CD8-positive, alpha-beta T cell (primary cell): ENCODE measurements at regions of chr3 and their contacts with region 1.

Region 1: GRCh38 chr3:151227807-151228665 is 25.0 kb upstream of the GPR171 start:
- DNase-seq: peak; percentile 61 to 88 (median 79)
- ATAC-seq: peak; percentile 83
- H3K4me3 ChIP-seq: no peak overlapping the region
- H3K4me3 Mint-ChIP-seq: no peak overlapping the region
- H3K27ac ChIP-seq: no peak overlapping the region
- H3K27ac Mint-ChIP-seq: peak overlapping the region; percentile 4
- H3K4me1 ChIP-seq: peaks cover 16% of the 10 kb centered on the region
- H3K4me1 Mint-ChIP-seq: peaks cover 48% of the 10 kb centered on the region
- H3K27me3 ChIP-seq: no peaks in the 10 kb centered on the region
- H3K27me3 Mint-ChIP-seq: no peaks in the 10 kb centered on the region
- CTCF ChIP-seq: peak; percentile 92

Region 2: GRCh38 chr3:151203051-151203420 is 25.0 kb before region 1 on chr3 and contains the start of gene GPR171:
- CTCF ChIA-PET with region 1: interaction called, 18 read pairs
- POLR2A ChIA-PET with region 1: interaction called, 4 read pairs
- intact Hi-C with region 1: loop called in 1 of 2 experiments (anchors 1 kb)
- DNase-seq: peak; percentile 46 to 91 (median 68)
- ATAC-seq: peak; percentile 84
- H3K4me3 ChIP-seq: peak within 1 kb of the TSS; percentile 50 to 59
- H3K4me3 Mint-ChIP-seq: peak within 1 kb of the TSS; percentile 76
- H3K27ac ChIP-seq: peak within 1 kb of the TSS; percentile 36 to 72
- H3K27ac Mint-ChIP-seq: peak within 1 kb of the TSS; percentile 91
- H3K4me1 ChIP-seq: peaks cover 67% of the 10 kb centered on the region
- H3K4me1 Mint-ChIP-seq: peaks cover 81% of the 10 kb centered on the region
- H3K27me3 ChIP-seq: no peaks in the 10 kb centered on the region
- H3K27me3 Mint-ChIP-seq: no peaks in the 10 kb centered on the region
- CTCF ChIP-seq: no peak
- total RNA-seq, gene GPR171: 11.5 to 13.4 TPM

Region 3: GRCh38 chr3:151256749-151257148 is 28.7 kb after region 1 on chr3:
- CTCF ChIA-PET with region 1: interaction called, 18 read pairs
- POLR2A ChIA-PET with region 1: no interaction called
- intact Hi-C with region 1: no loop called
- DNase-seq: no peak
- ATAC-seq: no peak
- H3K4me3 ChIP-seq: no peak overlapping the region
- H3K4me3 Mint-ChIP-seq: no peak overlapping the region
- H3K27ac ChIP-seq: no peak overlapping the region
- H3K27ac Mint-ChIP-seq: no peak overlapping the region
- H3K4me1 ChIP-seq: no peaks in the 10 kb centered on the region
- H3K4me1 Mint-ChIP-seq: no peaks in the 10 kb centered on the region
- H3K27me3 ChIP-seq: no peaks in the 10 kb centered on the region
- H3K27me3 Mint-ChIP-seq: peaks cover 4% of the 10 kb centered on the region
- CTCF ChIP-seq: no peak

Region 4: DNA sequence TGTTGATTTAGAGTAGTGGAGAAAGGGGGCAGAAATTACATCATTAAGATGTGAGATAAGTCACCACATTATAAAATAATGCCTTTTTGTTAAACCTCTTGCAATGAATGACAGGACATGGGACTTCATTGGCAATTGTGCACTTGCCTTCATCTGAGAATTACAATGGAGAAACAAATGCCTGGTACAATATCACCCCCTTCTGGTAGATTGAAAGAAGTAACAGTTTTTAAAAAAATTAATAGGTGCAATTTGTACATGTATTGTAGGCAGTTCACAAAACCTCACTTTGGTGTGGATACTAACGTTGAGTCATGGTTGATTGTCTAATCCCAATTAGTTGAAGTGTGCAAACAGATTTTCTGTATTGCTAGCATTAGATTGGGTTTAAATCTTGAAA is 54.9 kb after region 1 on chr3:
- CTCF ChIA-PET with region 1: interaction called, 226 read pairs
- POLR2A ChIA-PET with region 1: interaction called, 5 read pairs
- intact Hi-C with region 1: loop called (anchors 1 kb)
- DNase-seq: peak in 2 of 9 experiments; percentile 73 to 79
- ATAC-seq: peak; percentile 56
- H3K4me3 ChIP-seq: no peak overlapping the region
- H3K4me3 Mint-ChIP-seq: no peak overlapping the region
- H3K27ac ChIP-seq: no peak overlapping the region
- H3K27ac Mint-ChIP-seq: no peak overlapping the region
- H3K4me1 ChIP-seq: peaks cover 10% of the 10 kb centered on the region
- H3K4me1 Mint-ChIP-seq: peaks cover 18% of the 10 kb centered on the region
- H3K27me3 ChIP-seq: no peaks in the 10 kb centered on the region
- H3K27me3 Mint-ChIP-seq: no peaks in the 10 kb centered on the region
- CTCF ChIP-seq: peak; percentile 90

Region 5: GRCh38 chr3:151580591-151580990 is 352.6 kb after region 1 on chr3:
- CTCF ChIA-PET with region 1: no interaction called
- POLR2A ChIA-PET with region 1: no interaction called
- intact Hi-C with region 1: no loop called
- DNase-seq: no peak
- ATAC-seq: no peak
- H3K4me3 ChIP-seq: no peak overlapping the region
- H3K4me3 Mint-ChIP-seq: no peak overlapping the region
- H3K27ac ChIP-seq: no peak overlapping the region
- H3K27ac Mint-ChIP-seq: no peak overlapping the region
- H3K4me1 ChIP-seq: no peaks in the 10 kb centered on the region
- H3K4me1 Mint-ChIP-seq: no peaks in the 10 kb centered on the region
- H3K27me3 ChIP-seq: no peaks in the 10 kb centered on the region
- H3K27me3 Mint-ChIP-seq: peaks cover 2% of the 10 kb centered on the region
- CTCF ChIP-seq: no peak

Region 6: GRCh38 chr3:151838583-151839312 is 610.7 kb after region 1 on chr3:
- CTCF ChIA-PET with region 1: interaction called, 4 read pairs
- POLR2A ChIA-PET with region 1: no interaction called
- intact Hi-C with region 1: loop called (anchors 1 to 2 kb)
- DNase-seq: peak in 5 of 9 experiments; percentile 2 to 63 (median 30)
- ATAC-seq: peak; percentile 49
- H3K4me3 ChIP-seq: no peak overlapping the region
- H3K4me3 Mint-ChIP-seq: no peak overlapping the region
- H3K27ac ChIP-seq: no peak overlapping the region
- H3K27ac Mint-ChIP-seq: no peak overlapping the region
- H3K4me1 ChIP-seq: no peaks in the 10 kb centered on the region
- H3K4me1 Mint-ChIP-seq: no peaks in the 10 kb centered on the region
- H3K27me3 ChIP-seq: peaks cover 0 to 2% of the 10 kb centered on the region in 2 experiments
- H3K27me3 Mint-ChIP-seq: peaks cover 9% of the 10 kb centered on the region
- CTCF ChIP-seq: peak; percentile 59